Stomach (tissue), 19 donors: ENCODE measurements at regions of chr12 and their contacts with region 1.

Region 1: DNA sequence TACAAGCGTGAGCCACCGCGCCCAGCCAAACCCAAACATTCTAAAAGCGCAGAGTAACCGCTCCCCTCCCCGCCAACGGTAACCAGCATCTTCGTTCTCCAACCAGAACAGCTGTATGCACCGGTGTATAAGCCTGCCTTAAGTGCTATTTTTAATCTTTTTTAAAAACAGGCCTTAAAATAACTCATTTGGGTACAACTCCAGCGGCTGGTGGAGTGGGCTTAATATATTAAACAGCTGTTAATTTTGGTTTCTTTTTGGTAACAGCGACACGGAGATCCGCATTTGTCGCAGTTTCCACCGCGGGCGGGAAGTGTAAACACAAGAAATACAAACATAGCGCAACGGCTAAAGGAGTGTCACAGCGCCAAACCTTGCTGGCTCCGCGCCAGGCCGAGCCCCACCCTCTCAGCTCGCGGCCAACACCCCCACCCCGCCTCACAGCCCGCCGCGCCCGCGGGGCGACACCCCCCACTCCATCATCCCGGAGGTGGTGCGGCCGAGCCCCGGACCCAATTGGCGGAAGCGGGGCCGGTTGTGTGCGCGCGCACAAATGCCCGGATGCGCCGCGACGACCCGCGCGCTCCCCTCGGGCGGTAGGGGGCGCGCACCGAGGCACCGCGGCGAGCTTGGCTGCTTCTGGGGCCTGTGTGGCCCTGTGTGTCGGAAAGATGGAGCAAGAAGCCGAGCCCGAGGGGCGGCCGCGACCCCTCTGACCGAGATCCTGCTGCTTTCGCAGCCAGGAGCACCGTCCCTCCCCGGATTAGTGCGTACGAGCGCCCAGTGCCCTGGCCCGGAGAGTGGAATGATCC is at the start of gene MDM2:
- DNase-seq: peak; percentile 97 to 98
- H3K4me3 ChIP-seq: peak within 1 kb of the TSS; percentile 62 to 99 (median 86)
- H3K27ac ChIP-seq: peak within 1 kb of the TSS; percentile 98 to 100 (median 99)
- H3K4me1 ChIP-seq: peaks cover 21 to 65% (median 48%) of the 10 kb centered on the region in 4 donors
- H3K27me3 ChIP-seq: no peaks in the 10 kb centered on the region
- CTCF ChIP-seq: peak in 5 of 7 experiments; percentile 64 to 91 (median 83)
- EP300 ChIP-seq: no peak
- POLR2A ChIP-seq: peak in 1 of 4 donors; percentile 84
- total RNA-seq, gene MDM2: 42.4 to 151 (median 132) TPM

Region 2: DNA sequence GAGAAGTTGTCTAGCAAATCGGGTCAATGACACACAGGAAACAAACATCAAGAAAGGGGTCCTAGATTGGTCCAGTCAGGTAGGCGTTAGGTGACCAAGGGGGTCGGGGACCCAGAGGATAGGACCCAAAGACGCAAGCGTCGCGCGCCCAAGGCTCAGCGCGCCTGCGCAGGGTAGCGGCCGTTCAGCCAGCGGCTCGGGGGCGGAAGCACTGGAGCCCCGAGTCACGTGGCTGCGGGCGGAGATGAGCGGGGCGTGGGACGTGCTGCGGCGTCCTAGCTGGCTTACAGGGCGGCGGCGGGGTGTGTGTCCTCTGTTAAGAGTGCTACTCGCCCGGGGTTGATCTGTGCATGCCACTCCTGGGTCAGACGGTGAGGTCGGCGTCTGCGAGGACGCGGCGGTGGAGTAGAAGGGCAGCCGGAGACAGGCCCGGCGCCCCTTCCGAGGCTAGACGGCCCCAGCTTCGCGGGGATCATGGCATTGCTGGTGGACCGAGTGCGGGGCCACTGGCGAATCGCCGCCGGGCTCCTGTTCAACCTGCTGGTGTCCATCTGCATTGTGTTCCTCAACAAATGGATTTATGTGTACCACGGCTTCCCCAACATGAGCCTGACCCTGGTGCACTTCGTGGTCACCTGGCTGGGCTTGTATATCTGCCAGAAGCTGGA is 61.7 kb before region 1 on chr12 and contains the start of gene SLC35E3:
- intact Hi-C with region 1: loop called (anchors 10 kb)
- DNase-seq: peak; percentile 92 to 98
- H3K4me3 ChIP-seq: peak within 1 kb of the TSS; percentile 80 to 96 (median 81)
- H3K27ac ChIP-seq: peak within 1 kb of the TSS; percentile 75 to 86 (median 78)
- H3K4me1 ChIP-seq: peaks cover 0 to 35% (median 26%) of the 10 kb centered on the region in 4 donors
- H3K27me3 ChIP-seq: no peaks in the 10 kb centered on the region
- CTCF ChIP-seq: no peak
- EP300 ChIP-seq: no peak
- POLR2A ChIP-seq: no peak
- total RNA-seq, gene SLC35E3: under 0.01 to 5.9 (median 1.2) TPM